BJ (cell line): ENCODE measurements at regions of chr16 and their contacts with region 1.

Region 1: DNA sequence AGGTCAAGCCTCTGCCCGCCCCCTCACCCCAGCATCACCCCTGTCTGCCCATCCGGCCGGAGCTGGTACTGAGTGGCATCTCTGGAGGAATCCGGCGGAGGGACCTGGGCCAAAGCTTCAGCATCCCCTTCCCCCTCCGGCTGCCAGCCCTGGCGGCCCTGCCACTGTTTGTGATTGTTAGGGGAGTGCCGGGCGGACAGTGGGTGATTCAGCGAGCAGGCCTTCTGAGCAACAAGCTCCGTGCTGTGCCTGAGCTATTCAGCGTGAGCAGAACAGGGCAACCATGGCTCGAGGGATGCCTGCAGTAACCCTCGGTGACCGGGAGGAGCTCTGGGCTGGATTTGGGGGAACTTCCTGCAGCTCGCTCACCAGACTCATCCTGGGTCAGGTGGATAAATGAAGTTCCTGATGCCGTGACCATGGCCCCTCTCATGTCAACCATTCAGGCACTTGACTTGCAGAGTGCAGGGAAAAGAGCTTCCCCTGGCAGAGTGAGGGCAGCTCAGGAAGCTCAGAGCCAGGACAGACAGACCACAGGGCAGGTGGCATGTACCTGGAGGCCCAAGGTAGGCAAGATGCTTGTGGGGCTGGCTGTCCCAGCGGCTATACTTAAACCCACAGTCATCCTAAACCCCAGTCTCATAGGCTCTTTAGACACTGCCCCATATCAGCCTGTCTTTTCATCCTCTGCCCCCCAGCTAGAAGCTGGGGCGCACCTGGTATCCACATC is 24.3 kb upstream of the MLKL start:
- DNase-seq: peak; percentile 9
- H3K4me3 ChIP-seq: no peak overlapping the region
- H3K27me3 ChIP-seq: no peaks in the 10 kb centered on the region; the same call in 1 of the 2 replicates
- CTCF ChIP-seq: peak; percentile 41

Region 2: DNA sequence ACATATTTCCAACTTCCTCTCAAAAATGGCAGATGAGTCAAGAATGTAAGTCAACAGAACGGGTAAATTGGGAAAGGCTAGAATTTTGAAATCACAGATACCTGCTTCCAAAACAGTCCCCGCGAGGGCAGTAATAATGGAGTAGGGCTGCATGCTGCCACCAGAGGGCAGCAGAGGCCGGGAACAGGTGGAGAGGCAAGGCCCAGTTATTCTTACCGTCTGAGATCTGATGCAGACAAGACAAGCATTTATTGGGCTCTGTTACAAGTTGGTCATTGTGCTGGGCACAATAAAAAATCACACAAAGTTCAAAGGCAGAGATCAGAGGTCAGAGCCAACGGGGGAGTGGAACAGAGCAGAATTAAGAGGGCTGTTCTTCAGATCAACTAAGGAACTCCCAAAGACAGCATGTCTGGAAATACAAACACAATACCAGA is 15.5 kb before region 1 on chr16:
- CTCF ChIA-PET with region 1: interaction called, 12 read pairs
- POLR2A ChIA-PET with region 1: no interaction called
- DNase-seq: peak; percentile 15
- H3K4me3 ChIP-seq: no peak overlapping the region
- H3K27me3 ChIP-seq: peaks cover 5% of the 10 kb centered on the region; the same call in 1 of the 2 replicates
- CTCF ChIP-seq: peak; percentile 97